IMR-90 (cell line): ENCODE measurements at regions of chr6 and their contacts with region 1.

Region 1: DNA sequence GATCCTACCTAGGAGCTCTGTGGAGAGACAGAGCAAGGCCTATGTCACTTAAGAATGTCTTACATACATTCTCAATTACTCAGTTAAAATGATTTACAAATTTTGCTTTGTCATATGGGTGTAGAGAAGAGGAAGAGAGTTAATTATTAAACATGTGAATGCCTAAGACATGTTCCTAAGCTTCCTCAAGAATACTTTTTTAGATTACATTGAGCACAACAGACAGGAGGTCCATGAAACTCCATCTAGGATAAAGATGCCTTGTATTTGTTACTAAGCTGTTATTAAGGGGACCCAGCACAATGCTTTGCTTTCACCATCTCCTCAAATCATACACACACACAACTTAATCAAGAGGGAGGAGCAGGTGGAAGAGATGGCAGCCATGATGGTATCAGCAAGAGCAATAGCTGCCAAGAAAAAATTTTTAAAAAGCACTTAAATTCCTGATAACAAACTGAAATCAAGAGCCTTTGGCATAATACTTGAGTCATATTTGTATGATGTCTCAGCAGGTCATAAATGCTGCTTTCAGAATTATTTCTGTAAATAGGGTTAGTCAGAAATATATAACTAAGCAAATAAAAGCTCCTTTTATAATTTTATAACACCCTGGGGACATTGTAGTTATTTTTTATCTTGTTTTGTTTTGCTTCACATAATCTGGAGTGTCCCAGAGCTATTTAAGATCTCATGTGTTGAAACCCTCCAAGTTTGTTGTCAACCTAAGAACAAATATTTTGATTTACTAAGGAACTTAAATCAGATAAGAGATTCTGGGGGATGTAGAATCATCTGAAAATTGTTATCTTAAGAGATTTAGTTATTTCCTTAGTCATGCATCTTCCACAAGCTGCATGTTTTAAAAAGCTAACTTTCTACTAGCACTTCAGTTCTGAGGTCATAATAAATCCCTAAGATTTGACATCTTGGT is 70.0 kb upstream of the CD2AP start:
- DNase-seq: no peak
- ATAC-seq: no peak
- H3K4me3 ChIP-seq: no peak overlapping the region
- H3K27ac ChIP-seq: no peak overlapping the region
- H3K4me1 ChIP-seq: no peaks in the 10 kb centered on the region
- H3K27me3 ChIP-seq: no peaks in the 10 kb centered on the region
- CTCF ChIP-seq: no peak
- POLR2A ChIP-seq: no peak
- RAD21 ChIP-seq: no peak

Region 2: DNA sequence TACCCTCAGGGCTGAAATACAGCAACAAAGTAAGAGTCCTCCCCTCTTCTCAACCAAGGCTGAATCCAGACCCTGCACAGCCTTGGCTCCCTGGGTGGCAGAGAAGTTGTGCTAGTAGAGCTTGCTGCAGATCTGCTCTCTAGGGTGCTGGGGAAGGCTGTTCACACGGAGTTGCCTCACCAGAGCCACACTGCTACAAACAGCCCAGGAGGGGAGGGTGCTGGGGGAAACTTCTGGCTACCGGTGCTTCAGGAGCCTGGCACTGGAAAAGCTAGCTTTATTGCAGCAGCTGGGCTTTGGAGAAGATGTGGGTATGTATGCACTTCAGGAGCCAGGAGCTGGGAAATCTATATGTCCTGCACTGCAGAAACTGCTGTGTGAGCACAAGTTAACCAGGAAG is 1992.3 kb before region 1 on chr6:
- CTCF ChIA-PET with region 1: no interaction called
- POLR2A ChIA-PET with region 1: no interaction called
- dilution Hi-C with region 1: no loop called
- in situ Hi-C with region 1: no loop called
- intact Hi-C with region 1: no loop called
- DNase-seq: no peak
- ATAC-seq: no peak
- H3K4me3 ChIP-seq: no peak overlapping the region
- H3K27ac ChIP-seq: no peak overlapping the region
- H3K4me1 ChIP-seq: peaks cover 4% of the 10 kb centered on the region; the same call in 1 of the 2 replicates
- H3K27me3 ChIP-seq: no peaks in the 10 kb centered on the region
- CTCF ChIP-seq: no peak
- POLR2A ChIP-seq: no peak
- RAD21 ChIP-seq: no peak

Region 3: GRCh38 chr6:47483853-47484546 is 76.4 kb after region 1 on chr6:
- CTCF ChIA-PET with region 1: no interaction called
- POLR2A ChIA-PET with region 1: no interaction called
- dilution Hi-C with region 1: no loop called
- in situ Hi-C with region 1: no loop called
- intact Hi-C with region 1: no loop called
- DNase-seq: peak; percentile 35
- ATAC-seq: no peak
- H3K4me3 ChIP-seq: no peak overlapping the region
- H3K27ac ChIP-seq: no peak overlapping the region
- H3K4me1 ChIP-seq: peaks cover 2% of the 10 kb centered on the region
- H3K27me3 ChIP-seq: no peaks in the 10 kb centered on the region
- CTCF ChIP-seq: no peak
- POLR2A ChIP-seq: no peak
- RAD21 ChIP-seq: no peak

Region 4: GRCh38 chr6:47769982-47770381 is 362.4 kb after region 1 on chr6:
- CTCF ChIA-PET with region 1: no interaction called
- POLR2A ChIA-PET with region 1: no interaction called
- dilution Hi-C with region 1: no loop called
- in situ Hi-C with region 1: loop called (anchors 10 kb)
- intact Hi-C with region 1: no loop called
- DNase-seq: no peak
- ATAC-seq: no peak
- H3K4me3 ChIP-seq: no peak overlapping the region
- H3K27ac ChIP-seq: no peak overlapping the region
- H3K4me1 ChIP-seq: no peaks in the 10 kb centered on the region
- H3K27me3 ChIP-seq: no peaks in the 10 kb centered on the region
- CTCF ChIP-seq: no peak
- POLR2A ChIP-seq: no peak
- RAD21 ChIP-seq: no peak